Right cardiac atrium (tissue), 5 donors: ENCODE measurements at regions of chr1 and their contacts with region 1.

Region 1: DNA sequence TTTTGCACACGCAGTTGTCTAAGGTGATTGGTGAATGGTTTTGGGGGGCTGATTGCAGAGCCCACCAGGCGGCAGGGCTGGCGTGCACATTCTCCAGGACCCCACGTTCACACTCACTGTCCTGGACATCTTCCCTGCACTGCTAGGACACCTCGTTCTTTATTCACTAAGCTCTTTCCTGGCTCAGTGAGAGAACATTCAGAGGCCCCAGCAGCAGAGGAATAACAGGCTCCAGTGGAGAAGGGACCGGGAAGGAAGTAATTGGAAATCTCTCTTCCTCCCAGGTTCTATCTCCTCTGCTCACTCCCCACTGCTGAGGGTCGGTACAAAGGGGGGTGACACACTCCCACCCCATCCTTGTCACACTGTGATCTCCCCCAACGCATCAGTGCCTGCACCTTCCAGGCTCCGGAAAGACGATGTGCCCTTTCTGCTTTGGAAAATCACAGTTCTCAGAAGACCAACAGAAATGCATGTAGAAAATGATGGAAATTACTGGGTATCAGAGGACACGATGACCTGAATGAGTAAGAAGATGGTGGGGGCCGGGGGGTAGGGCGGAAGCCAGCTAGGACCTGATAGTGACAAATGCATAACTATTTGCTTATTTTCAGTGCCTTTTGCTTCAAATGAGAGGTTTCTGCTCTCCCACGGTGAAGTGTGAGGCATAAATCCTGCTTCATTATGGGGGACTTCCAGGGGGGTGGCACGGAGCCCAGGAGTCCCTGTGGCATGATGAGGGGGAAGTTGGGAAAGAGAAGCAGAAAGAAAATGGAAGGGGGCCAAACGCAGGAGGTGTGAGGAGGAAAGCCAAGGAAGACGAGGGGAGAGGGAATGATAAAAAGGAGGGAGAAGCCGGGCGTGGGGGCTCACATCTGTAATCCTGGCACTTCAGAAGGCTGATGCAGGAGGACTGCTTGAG is 25.2 kb upstream of the KIF26B start:
- DNase-seq: no peak
- ATAC-seq: no peak
- H3K4me3 ChIP-seq: no peak overlapping the region
- H3K27ac ChIP-seq: no peak overlapping the region
- H3K4me1 ChIP-seq: no peaks in the 10 kb centered on the region
- H3K27me3 ChIP-seq: no peaks in the 10 kb centered on the region

Region 2: DNA sequence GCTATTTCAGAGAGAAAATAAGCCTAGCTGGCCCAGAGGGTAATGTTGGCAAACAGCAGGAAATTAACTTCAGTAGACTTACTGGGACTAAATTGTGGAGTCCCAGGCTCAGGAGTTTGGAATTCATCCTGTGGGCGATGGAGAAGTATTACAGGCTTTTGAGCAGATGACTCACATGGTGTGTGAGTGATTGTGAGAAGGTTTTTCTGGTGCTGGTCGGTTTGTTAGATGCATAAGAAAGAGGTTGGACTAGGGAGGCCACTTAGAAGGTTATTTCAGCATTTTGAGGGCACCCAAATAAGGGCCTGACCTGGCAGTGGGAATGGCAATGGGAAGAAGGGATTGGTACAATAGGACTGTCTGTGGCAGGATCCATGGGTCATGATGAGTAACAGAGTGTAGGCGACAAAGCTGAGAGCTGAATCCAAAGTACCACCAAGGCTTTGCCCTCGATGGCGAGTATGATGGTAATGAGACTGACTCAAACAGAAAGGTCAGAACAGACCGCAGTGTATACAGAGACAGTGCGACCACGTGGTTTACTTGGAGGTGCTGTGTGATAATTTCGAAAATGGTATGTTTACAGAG is 44.0 kb before region 1 on chr1:
- intact Hi-C with region 1: loop called in 1 of 4 experiments (anchors 5 kb)
- DNase-seq: no peak
- ATAC-seq: no peak
- H3K4me3 ChIP-seq: no peak overlapping the region
- H3K27ac ChIP-seq: no peak overlapping the region
- H3K4me1 ChIP-seq: no peaks in the 10 kb centered on the region
- H3K27me3 ChIP-seq: no peaks in the 10 kb centered on the region

Region 3: GRCh38 chr1:245298781-245299180 is 169.2 kb after region 1 on chr1:
- intact Hi-C with region 1: no loop called
- DNase-seq: no peak
- ATAC-seq: peak in 1 of 2 donors; percentile 41
- H3K4me3 ChIP-seq: no peak overlapping the region
- H3K27ac ChIP-seq: no peak overlapping the region
- H3K4me1 ChIP-seq: no peaks in the 10 kb centered on the region
- H3K27me3 ChIP-seq: no peaks in the 10 kb centered on the region